ENCODE measurements at regions of chr13 and their contacts with region 1.

Region 1: DNA sequence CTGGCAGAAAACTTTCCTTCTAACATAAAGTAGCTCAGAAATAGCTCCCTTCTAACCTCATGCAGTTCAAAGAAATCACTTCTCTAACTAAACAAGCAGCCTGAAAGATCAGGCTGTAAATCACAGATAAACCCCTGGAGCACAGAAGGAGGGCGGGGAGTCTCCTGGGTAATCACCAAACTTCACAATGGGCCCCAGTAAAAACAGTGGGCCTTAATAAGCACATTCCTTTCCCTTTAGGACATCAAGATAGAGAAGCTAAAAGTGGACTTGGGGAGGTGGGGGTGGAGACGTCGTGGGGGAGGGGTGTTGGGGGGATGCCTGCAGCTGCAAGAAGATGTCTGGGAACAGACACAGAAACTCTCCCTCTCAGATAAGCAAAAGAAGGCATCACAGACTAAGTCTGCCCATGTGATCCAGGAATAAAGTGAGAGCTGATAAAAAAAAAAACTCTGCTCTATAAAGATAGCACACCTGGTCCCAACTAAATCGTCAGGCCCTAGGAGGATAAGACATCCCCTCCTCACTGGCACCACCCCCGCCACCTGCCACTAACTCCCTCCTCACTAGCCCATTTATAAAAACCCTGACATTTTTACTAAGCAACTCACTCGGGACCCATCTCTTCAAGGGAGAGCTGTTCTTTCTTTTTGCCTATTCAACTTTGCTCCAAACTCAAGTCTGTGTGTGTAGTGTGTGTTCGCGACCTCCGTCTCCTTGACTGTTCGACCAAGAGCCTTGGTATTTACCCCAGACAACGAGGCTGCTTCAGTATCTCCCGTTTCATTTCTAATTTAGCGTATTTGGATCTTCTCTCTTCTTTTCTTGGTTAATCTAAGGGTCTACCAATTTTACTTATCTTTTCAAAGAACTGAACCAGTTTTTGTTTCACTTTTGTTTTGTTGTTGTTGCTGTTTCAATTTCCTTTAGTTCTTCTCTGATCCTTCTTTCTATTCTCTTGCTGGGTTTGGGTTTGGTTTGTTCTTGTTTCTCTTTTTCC is 31.7 kb downstream of the DNAJC15 start:
- DNase-seq: peak in 25 of 35 experiments; percentile 2 to 47 (median 22)
- ATAC-seq: peak; percentile 36 to 61 (median 56)
- H3K4me3 ChIP-seq: peak overlapping the region; percentile 63 to 74
- H3K4me3 Mint-ChIP-seq: no peak overlapping the region
- H3K27ac ChIP-seq: peak overlapping the region; percentile 93
- H3K27ac Mint-ChIP-seq: no peak overlapping the region
- H3K4me1 ChIP-seq: peaks cover 26 to 27% of the 10 kb centered on the region in 2 experiments
- H3K4me1 Mint-ChIP-seq: peaks cover 28 to 37% (median 32%) of the 10 kb centered on the region in 3 donors
- H3K27me3 ChIP-seq: no peaks in the 10 kb centered on the region
- H3K27me3 Mint-ChIP-seq: no peaks in the 10 kb centered on the region

Region 2: GRCh38 chr13:43041369-43041921 is 13.7 kb before region 1 on chr13:
- CTCF ChIA-PET with region 1: no interaction called
- POLR2A ChIA-PET with region 1: interaction called in 1 of 2 experiments, 11 read pairs
- DNase-seq: no peak
- ATAC-seq: no peak
- H3K4me3 ChIP-seq: no peak overlapping the region
- H3K4me3 Mint-ChIP-seq: no peak overlapping the region
- H3K27ac ChIP-seq: no peak overlapping the region
- H3K27ac Mint-ChIP-seq: peak overlapping the region in 1 of 2 donors; percentile 53
- H3K4me1 ChIP-seq: peaks cover 2 to 10% of the 10 kb centered on the region in 2 experiments
- H3K4me1 Mint-ChIP-seq: peaks cover 49 to 83% (median 71%) of the 10 kb centered on the region in 3 donors
- H3K27me3 ChIP-seq: no peaks in the 10 kb centered on the region
- H3K27me3 Mint-ChIP-seq: no peaks in the 10 kb centered on the region

Region 3: GRCh38 chr13:43269037-43269481 is 214.0 kb after region 1 on chr13:
- CTCF ChIA-PET with region 1: no interaction called
- POLR2A ChIA-PET with region 1: no interaction called
- DNase-seq: no peak
- ATAC-seq: no peak
- H3K4me3 ChIP-seq: no peak overlapping the region
- H3K4me3 Mint-ChIP-seq: no peak overlapping the region
- H3K27ac ChIP-seq: no peak overlapping the region
- H3K27ac Mint-ChIP-seq: no peak overlapping the region
- H3K4me1 ChIP-seq: no peaks in the 10 kb centered on the region
- H3K4me1 Mint-ChIP-seq: no peaks in the 10 kb centered on the region
- H3K27me3 ChIP-seq: no peaks in the 10 kb centered on the region
- H3K27me3 Mint-ChIP-seq: peaks cover 0 to 10% of the 10 kb centered on the region in 2 donors

Region 4: DNA sequence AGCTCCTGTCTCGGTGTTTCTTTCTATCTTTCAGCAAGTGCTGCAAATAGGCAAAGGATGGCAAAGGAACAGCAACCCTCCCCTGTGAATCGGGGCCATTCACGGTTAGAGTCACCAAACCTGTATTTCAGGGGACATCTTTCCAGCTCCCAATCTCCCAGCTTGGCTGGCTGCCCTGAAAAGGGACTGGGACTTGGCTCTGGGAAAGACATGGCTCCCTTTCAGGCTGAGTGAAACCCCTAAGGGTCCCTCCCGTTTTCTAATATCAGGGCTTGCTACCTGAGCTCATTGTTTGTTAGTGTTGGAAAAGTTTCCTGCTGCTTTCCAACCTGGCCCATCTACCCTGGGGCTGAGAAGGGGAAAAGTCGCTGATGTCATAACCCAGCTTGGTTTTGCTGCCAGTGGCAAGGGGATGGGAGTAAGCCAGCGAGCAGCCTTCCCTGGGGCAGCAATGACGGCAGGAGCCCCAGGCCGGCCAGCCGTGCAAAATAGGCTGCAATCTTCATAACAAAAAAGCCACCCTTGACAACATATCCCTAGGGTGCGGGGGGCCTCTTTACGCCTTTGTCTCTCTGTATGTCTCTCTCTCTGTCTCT is 1348.5 kb after region 1 on chr13:
- CTCF ChIA-PET with region 1: no interaction called
- POLR2A ChIA-PET with region 1: no interaction called
- DNase-seq: no peak
- ATAC-seq: no peak
- H3K4me3 ChIP-seq: no peak overlapping the region
- H3K4me3 Mint-ChIP-seq: no peak overlapping the region
- H3K27ac ChIP-seq: no peak overlapping the region
- H3K27ac Mint-ChIP-seq: no peak overlapping the region
- H3K4me1 ChIP-seq: no peaks in the 10 kb centered on the region
- H3K4me1 Mint-ChIP-seq: no peaks in the 10 kb centered on the region
- H3K27me3 ChIP-seq: peaks cover 0 to 13% of the 10 kb centered on the region in 2 experiments
- H3K27me3 Mint-ChIP-seq: peaks cover 4 to 18% of the 10 kb centered on the region in 2 donors

Measured in T-cell (primary cell).